Breast epithelium (tissue), 4 donors: ENCODE measurements at regions of chr1 and their contacts with region 1.

Region 1: GRCh38 chr1:244864253-244865027 is at the start of gene HNRNPU:
- DNase-seq: peak; percentile 96 to 97
- H3K4me3 ChIP-seq: peak within 1 kb of the TSS; percentile 98 to 99 (median 99)
- H3K27ac ChIP-seq: peak within 1 kb of the TSS; percentile 99 to 100
- H3K4me1 ChIP-seq: peaks cover 0 to 15% of the 10 kb centered on the region in 2 donors
- H3K27me3 ChIP-seq: no peaks in the 10 kb centered on the region
- CTCF ChIP-seq: peak; percentile 55 to 66 (median 64)
- POLR2A ChIP-seq: peak; percentile 93
- total RNA-seq, gene HNRNPU: 381 to 500 (median 416) TPM

Region 2: GRCh38 chr1:244969355-244970235 is 105.2 kb after region 1 on chr1:
- intact Hi-C with region 1: loop called (anchors 5 kb)
- DNase-seq: peak; percentile 73 to 78
- H3K4me3 ChIP-seq: peak overlapping the region; percentile 75 to 80 (median 75)
- H3K27ac ChIP-seq: peak overlapping the region; percentile 99 to 100
- H3K4me1 ChIP-seq: no peaks in the 10 kb centered on the region
- H3K27me3 ChIP-seq: no peaks in the 10 kb centered on the region
- CTCF ChIP-seq: peak in 2 of 3 donors; percentile 12 to 15
- POLR2A ChIP-seq: peak; percentile 66